ENCODE measurements at regions of chr5 and their contacts with region 1.

Region 1: DNA sequence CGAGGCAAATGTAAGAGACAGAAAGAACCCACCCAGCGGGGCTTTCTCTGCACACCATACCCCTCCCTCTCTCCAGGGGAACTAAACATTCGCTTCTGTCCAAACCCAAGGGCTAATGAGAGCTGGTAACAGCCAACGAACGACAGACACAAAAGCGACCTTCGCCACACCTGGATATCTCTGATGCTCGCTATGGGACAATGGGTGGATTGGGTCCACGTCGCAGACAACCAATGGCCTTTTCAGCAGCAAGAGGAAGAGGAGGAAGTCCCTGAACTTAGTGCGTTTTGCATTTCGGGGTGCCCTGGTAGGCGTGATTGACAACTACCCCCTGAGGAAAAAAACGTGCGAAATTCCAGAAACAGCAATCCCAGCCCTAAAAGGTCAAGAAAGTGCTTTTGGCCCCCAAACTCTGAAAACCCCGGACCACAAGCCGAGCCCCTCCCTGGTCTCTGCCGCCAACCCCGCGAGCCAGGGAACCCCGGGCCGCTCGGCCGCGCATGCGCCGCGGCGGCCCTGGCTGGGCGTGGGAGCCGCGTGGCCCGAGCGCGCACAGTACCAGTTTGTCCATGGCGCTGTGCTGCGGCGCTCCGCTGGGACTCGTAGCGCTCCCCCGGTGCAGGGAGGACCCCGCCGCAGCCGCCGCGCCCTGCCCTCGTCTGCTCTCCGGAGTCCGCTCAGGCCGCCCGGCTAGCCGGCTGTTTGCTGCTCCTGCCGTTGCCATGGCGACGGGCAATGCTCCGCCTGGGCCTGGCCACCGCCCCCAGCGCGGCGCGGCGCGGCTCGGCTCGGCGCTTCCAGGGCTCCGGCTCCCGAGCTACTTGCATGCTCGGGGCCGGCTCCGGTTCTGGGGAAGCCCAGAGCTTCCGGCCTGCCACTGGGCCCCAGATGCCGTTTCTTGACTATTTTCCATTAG is 66.9 kb upstream of the DNAH5 start:
- DNase-seq: peak; percentile 72
- ATAC-seq: peak; percentile 89
- H3K4me3 Mint-ChIP-seq: peak overlapping the region; percentile 85
- H3K27ac Mint-ChIP-seq: peak overlapping the region; percentile 73
- H3K4me1 Mint-ChIP-seq: peaks cover 10% of the 10 kb centered on the region
- H3K27me3 Mint-ChIP-seq: peaks cover 20% of the 10 kb centered on the region
- CTCF ChIP-seq: no peak

Region 2: GRCh38 chr5:14108170-14108996 is 97.0 kb after region 1 on chr5:
- CTCF ChIA-PET with region 1: no interaction called
- POLR2A ChIA-PET with region 1: no interaction called
- intact Hi-C with region 1: loop called (anchors 2 kb)
- DNase-seq: no peak
- ATAC-seq: peak; percentile 85
- H3K4me3 Mint-ChIP-seq: peak overlapping the region; percentile 76
- H3K27ac Mint-ChIP-seq: peak overlapping the region; percentile 80
- H3K4me1 Mint-ChIP-seq: peaks cover 40% of the 10 kb centered on the region
- H3K27me3 Mint-ChIP-seq: peaks cover 1% of the 10 kb centered on the region
- CTCF ChIP-seq: no peak

Region 3: DNA sequence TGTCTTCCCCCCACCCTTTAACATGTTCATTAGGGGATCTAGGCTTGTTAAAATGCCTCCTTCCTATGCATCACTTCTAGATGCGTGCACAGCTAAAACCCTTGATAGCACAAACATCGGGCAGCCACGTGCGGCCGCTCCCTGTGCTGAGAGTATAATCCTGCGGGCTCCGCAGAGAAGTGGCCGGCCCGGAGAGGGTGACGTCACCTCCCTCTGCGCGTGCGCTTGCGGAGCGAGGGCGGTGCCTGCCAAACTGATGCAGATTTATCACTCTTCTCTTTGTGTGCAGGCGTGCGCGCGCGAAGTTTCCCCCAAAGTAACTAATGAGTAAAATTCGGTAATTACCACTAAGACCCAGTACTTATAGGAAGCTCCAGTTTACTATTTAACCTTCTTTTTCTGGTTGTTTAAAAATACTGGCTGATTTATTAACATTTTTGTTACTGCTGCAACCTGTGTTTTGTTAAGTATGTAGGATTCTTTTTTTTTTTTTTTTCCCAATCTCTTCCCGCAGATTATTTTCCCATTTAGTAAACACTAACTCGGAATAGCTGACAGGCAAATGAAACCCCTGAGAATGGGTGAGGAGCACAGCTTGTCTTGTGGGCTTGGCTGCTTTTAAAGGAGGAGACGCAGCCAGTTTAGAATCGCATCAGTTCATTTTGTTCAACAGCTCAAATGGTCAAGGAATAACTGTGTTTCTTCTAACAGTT is 253.4 kb after region 1 on chr5:
- CTCF ChIA-PET with region 1: interaction called, 3 read pairs
- POLR2A ChIA-PET with region 1: no interaction called
- intact Hi-C with region 1: loop called (anchors 1 kb)
- DNase-seq: peak; percentile 79
- ATAC-seq: peak; percentile 98
- H3K4me3 Mint-ChIP-seq: peak overlapping the region; percentile 81
- H3K27ac Mint-ChIP-seq: peak overlapping the region; percentile 69
- H3K4me1 Mint-ChIP-seq: peaks cover 78% of the 10 kb centered on the region
- H3K27me3 Mint-ChIP-seq: no peaks in the 10 kb centered on the region
- CTCF ChIP-seq: no peak

Region 4: GRCh38 chr5:14270209-14270702 is 258.9 kb after region 1 on chr5:
- CTCF ChIA-PET with region 1: interaction called, 3 read pairs
- POLR2A ChIA-PET with region 1: no interaction called
- intact Hi-C with region 1: loop called (anchors 2 kb)
- DNase-seq: no peak
- ATAC-seq: peak; percentile 75
- H3K4me3 Mint-ChIP-seq: no peak overlapping the region
- H3K27ac Mint-ChIP-seq: no peak overlapping the region
- H3K4me1 Mint-ChIP-seq: peaks cover 53% of the 10 kb centered on the region
- H3K27me3 Mint-ChIP-seq: no peaks in the 10 kb centered on the region
- CTCF ChIP-seq: peak; percentile 67

Region 5: DNA sequence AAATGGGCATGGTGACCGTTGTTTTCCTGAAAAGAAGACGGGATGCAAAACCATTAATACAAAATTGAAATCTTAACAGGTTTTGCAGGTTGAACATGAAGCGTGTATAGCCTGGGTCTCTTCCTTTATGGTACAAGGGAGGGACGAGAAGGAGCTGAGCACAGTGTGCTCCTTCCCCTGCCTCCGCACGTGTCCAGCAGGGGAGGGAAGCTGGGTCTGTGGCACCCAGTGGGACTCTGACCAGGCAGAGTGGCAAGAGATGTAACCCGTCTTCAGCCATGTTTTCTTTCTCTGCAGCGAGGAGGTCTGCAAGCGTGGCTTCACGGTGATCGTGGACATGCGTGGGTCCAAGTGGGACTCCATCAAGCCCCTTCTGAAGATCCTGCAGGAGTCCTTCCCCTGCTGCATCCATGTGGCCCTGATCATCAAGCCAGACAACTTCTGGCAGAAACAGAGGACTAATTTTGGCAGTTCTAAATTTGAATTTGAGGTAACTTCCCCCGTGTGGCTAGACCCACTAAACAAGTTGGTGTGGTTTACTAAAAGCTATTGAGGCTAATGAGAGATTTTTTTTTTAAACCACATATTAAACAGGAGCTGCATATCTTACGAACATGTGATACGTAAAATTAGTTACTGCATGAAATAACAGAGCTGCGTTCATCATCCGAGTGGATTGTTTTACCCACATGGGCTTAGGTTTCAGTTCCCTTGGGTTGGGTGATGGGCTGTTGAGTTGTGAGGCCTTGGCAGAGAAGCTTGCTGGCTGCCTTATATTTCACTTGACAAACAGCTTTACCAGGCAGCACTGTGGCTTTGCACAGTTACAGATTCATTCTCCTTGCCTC is 275.5 kb after region 1 on chr5:
- CTCF ChIA-PET with region 1: no interaction called
- POLR2A ChIA-PET with region 1: no interaction called
- intact Hi-C with region 1: loop called (anchors 1 kb)
- DNase-seq: peak; percentile 26
- ATAC-seq: peak; percentile 98
- H3K4me3 Mint-ChIP-seq: peak overlapping the region; percentile 54
- H3K27ac Mint-ChIP-seq: peak overlapping the region; percentile 77
- H3K4me1 Mint-ChIP-seq: peaks cover 35% of the 10 kb centered on the region
- H3K27me3 Mint-ChIP-seq: no peaks in the 10 kb centered on the region
- CTCF ChIP-seq: no peak

Region 6: GRCh38 chr5:14871210-14872069 is 860.1 kb after region 1 on chr5 and contains the start of gene ANKH:
- CTCF ChIA-PET with region 1: no interaction called
- POLR2A ChIA-PET with region 1: no interaction called
- intact Hi-C with region 1: loop called (anchors 5 kb)
- DNase-seq: peak; percentile 86
- ATAC-seq: peak; percentile 88
- H3K4me3 Mint-ChIP-seq: peak within 1 kb of the TSS; percentile 87
- H3K27ac Mint-ChIP-seq: peak within 1 kb of the TSS; percentile 80
- H3K4me1 Mint-ChIP-seq: peaks cover 22% of the 10 kb centered on the region
- H3K27me3 Mint-ChIP-seq: no peaks in the 10 kb centered on the region
- CTCF ChIP-seq: no peak
- total RNA-seq, gene ANKH: 43.3 and 43.7 TPM in 2 replicates

Measured in activated B cell treated with CpG ODN at 0.5 μM for 24 hours (primary cell).